Transverse colon (tissue), 4 donors: ENCODE measurements at regions of chr17 and their contacts with region 1.

Region 1: DNA sequence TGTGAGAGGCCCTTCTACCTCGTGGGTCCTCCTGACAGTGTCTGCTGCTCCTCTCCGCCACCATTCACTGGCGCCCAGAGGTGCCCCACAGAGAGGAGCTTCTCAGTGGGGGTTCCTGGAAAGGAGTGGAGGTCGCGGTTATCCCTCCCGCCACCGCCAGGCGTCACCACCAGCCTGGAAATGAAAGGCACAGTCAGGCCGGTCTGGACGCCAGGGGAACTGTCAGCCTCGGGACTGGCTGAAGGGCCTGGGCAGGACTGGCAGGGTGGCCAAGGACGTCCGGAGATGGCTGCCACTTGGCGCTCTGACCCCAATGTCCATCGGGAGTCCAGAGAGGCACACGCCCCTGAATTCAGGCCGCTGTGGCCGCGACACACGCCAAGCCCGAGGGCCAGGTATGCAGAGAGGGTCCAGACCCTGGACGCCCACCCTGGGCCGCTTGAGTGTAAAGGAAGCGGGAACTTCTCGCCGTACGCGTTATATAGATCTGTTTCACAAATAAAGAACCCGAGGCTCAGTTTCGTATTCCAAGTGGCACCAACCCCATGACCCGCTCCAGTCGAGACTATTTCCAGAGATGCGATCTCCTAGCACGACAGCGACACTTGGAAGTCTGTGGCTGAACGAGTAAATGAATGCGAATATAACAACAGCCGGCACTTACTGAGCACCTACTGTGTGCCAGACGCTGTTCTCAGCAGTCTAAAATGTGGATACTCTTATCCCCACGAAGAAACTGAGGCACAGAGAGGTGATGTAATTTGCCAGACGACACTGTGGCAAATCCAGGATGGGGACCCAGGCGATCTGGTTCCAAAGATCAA is 7.6 kb upstream of the NXPH3 start:
- DNase-seq: peak; percentile 90
- H3K4me3 ChIP-seq: peak overlapping the region in 3 of 4 donors; percentile 22 to 53 (median 36)
- H3K27ac ChIP-seq: peak overlapping the region; percentile 62 to 83 (median 72)
- H3K4me1 ChIP-seq: peaks cover 10 to 42% (median 24%) of the 10 kb centered on the region in 4 donors
- H3K27me3 ChIP-seq: peaks cover 12% of the 10 kb centered on the region
- CTCF ChIP-seq: peak; percentile 92 to 99 (median 95)
- EP300 ChIP-seq: no peak
- POLR2A ChIP-seq: no peak

Region 2: GRCh38 chr17:48483471-48484131 is 1084.5 kb before region 1 on chr17:
- in situ Hi-C with region 1: no loop called
- intact Hi-C with region 1: no loop called
- DNase-seq: peak; percentile 38
- H3K4me3 ChIP-seq: no peak overlapping the region
- H3K27ac ChIP-seq: peak overlapping the region in 3 of 4 donors; percentile 15 to 37 (median 21)
- H3K4me1 ChIP-seq: peaks cover 0 to 7% (median 5%) of the 10 kb centered on the region in 4 donors
- H3K27me3 ChIP-seq: no peaks in the 10 kb centered on the region
- CTCF ChIP-seq: no peak
- EP300 ChIP-seq: no peak
- POLR2A ChIP-seq: no peak

Region 3: DNA sequence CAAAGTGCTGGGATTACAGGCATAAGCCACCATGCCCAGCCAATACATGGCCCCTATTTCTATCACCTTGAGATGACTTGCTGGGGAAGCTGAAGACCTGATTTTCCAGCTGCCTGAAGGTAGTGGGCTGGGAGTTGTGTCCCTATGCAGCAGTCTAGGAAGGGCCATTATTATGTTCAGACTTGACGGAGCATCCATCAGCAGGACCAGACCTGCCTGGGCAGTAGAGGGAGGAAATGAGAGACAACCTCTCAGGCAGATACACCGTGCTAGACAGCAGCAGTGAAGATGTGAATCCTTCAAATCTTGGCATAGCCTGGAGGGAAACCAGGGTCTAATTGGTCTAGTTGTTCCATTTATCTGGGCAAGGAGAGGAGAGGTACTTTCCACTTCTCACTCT is 301.9 kb before region 1 on chr17:
- in situ Hi-C with region 1: no loop called
- intact Hi-C with region 1: no loop called
- DNase-seq: no peak
- H3K4me3 ChIP-seq: no peak overlapping the region
- H3K27ac ChIP-seq: no peak overlapping the region
- H3K4me1 ChIP-seq: no peaks in the 10 kb centered on the region
- H3K27me3 ChIP-seq: no peaks in the 10 kb centered on the region
- CTCF ChIP-seq: no peak
- EP300 ChIP-seq: no peak
- POLR2A ChIP-seq: no peak

Region 4: GRCh38 chr17:49315551-49316257 is 252.4 kb before region 1 on chr17:
- in situ Hi-C with region 1: loop called in 2 of 4 experiments (anchors 25 kb)
- intact Hi-C with region 1: no loop called
- DNase-seq: peak; percentile 79
- H3K4me3 ChIP-seq: peak overlapping the region in 1 of 4 donors; percentile 4
- H3K27ac ChIP-seq: peak overlapping the region in 1 of 4 donors; percentile 32
- H3K4me1 ChIP-seq: peaks cover 0 to 13% (median 0%) of the 10 kb centered on the region in 4 donors
- H3K27me3 ChIP-seq: no peaks in the 10 kb centered on the region
- CTCF ChIP-seq: peak; percentile 74 to 86 (median 84)
- EP300 ChIP-seq: no peak
- POLR2A ChIP-seq: no peak

Region 5: GRCh38 chr17:49616601-49617131 is 48.6 kb after region 1 on chr17:
- in situ Hi-C with region 1: no loop called
- intact Hi-C with region 1: no loop called
- DNase-seq: peak; percentile 38
- H3K4me3 ChIP-seq: no peak overlapping the region
- H3K27ac ChIP-seq: peak overlapping the region; percentile 57 to 80 (median 68)
- H3K4me1 ChIP-seq: peaks cover 13 to 36% (median 19%) of the 10 kb centered on the region in 4 donors
- H3K27me3 ChIP-seq: no peaks in the 10 kb centered on the region
- CTCF ChIP-seq: no peak
- EP300 ChIP-seq: no peak
- POLR2A ChIP-seq: no peak

Region 6: GRCh38 chr17:49694847-49695683 is 127.0 kb after region 1 on chr17:
- in situ Hi-C with region 1: loop called (anchors 5 to 10 kb)
- intact Hi-C with region 1: loop called (anchors 2 kb)
- DNase-seq: peak; percentile 72
- H3K4me3 ChIP-seq: no peak overlapping the region
- H3K27ac ChIP-seq: peak overlapping the region in 1 of 4 donors; percentile 6
- H3K4me1 ChIP-seq: peaks cover 0 to 24% (median 10%) of the 10 kb centered on the region in 4 donors
- H3K27me3 ChIP-seq: no peaks in the 10 kb centered on the region
- CTCF ChIP-seq: peak; percentile 91 to 96 (median 93)
- EP300 ChIP-seq: no peak
- POLR2A ChIP-seq: no peak

Region 7: DNA sequence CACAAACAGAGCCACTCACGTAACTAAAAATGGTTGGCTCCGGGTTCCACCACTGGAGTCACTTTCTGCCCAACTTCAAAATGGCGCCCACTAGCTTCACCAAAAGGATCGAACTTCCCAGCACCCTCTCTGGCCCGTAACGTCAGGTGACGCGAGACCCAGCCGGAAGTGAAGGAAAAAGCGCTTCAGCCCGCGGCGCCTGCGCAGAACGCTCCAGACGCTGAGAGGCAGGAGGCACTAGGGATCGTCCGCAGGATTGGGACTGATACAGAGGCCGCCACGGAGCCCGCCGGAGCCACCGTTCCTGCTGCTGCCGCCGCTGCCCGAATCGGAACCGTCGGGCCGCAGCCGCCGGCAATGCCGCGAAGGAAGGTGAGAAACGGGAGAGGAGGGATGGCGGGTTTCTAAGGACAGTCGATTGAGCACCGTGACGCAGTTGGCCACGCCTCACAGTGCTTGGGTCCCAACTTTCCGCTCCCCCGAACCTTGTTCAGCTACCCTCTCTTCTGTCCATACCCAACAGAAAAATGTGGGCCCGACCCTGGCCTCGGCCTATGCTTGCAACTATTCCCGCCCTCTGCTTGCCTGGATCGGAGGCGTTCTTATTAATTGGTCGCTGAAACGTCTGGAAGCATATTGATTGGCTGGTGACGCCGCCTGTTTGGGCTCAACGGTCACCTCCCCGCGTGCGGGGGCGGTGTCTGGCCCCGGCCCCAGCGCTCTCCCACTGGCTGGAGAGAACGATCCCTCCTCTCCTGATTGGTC is 220.6 kb after region 1 on chr17 and contains the start of gene KAT7:
- in situ Hi-C with region 1: loop called in 1 of 4 experiments (anchors 10 kb)
- intact Hi-C with region 1: no loop called
- DNase-seq: peak; percentile 99
- H3K4me3 ChIP-seq: peak within 1 kb of the TSS; percentile 69 to 96 (median 91)
- H3K27ac ChIP-seq: peak within 1 kb of the TSS; percentile 94 to 99 (median 99)
- H3K4me1 ChIP-seq: peaks cover 13 to 53% (median 22%) of the 10 kb centered on the region in 4 donors
- H3K27me3 ChIP-seq: no peaks in the 10 kb centered on the region
- CTCF ChIP-seq: peak in 1 of 5 experiments; percentile 19
- EP300 ChIP-seq: no peak
- POLR2A ChIP-seq: peak; percentile 93
- total RNA-seq, gene KAT7: 21.3 to 54.2 (median 32.8) TPM

Region 8: DNA sequence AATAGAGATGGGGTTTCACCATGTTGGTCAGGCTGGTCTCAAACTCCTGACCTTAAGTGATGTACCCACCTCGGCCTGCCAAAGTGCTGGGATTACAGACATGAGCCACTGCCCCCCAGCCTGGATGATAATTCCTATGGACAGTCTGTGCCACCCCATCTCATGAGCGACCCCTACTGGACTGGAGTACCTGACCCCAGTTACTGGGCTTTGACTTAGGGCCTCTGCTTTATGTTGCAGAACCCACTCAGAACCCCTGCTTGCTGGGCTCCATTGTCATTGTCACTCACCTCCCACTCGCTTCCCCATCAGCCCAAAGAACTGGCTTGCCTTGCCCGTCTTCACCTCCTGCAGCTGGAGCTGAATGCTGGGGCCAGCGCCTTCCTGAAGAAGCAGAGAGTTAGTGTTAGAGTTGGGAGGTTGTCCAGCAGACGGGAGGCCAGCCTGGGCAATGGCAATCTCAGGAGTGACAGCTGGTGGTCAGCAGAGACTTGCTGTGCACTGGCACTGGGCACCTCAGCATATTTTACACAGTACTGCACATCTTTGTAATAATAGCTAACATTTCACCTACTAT is 275.8 kb after region 1 on chr17:
- in situ Hi-C with region 1: loop called in 1 of 4 experiments (anchors 10 kb)
- intact Hi-C with region 1: no loop called
- DNase-seq: no peak
- H3K4me3 ChIP-seq: no peak overlapping the region
- H3K27ac ChIP-seq: no peak overlapping the region
- H3K4me1 ChIP-seq: peaks cover 0 to 20% (median 12%) of the 10 kb centered on the region in 4 donors
- H3K27me3 ChIP-seq: no peaks in the 10 kb centered on the region
- CTCF ChIP-seq: peak in 1 of 5 experiments; percentile 21
- EP300 ChIP-seq: no peak
- POLR2A ChIP-seq: no peak

Region 9: GRCh38 chr17:49851387-49852291 is 283.6 kb after region 1 on chr17:
- in situ Hi-C with region 1: loop called in 2 of 4 experiments (anchors 10 to 25 kb)
- intact Hi-C with region 1: no loop called
- DNase-seq: peak; percentile 59
- H3K4me3 ChIP-seq: peak overlapping the region; percentile 21 to 57 (median 52)
- H3K27ac ChIP-seq: peak overlapping the region in 2 of 4 donors; percentile 30 to 36
- H3K4me1 ChIP-seq: peaks cover 0 to 19% (median 14%) of the 10 kb centered on the region in 4 donors
- H3K27me3 ChIP-seq: peaks cover 40% of the 10 kb centered on the region
- CTCF ChIP-seq: peak; percentile 46 to 62 (median 55)
- EP300 ChIP-seq: no peak
- POLR2A ChIP-seq: no peak

Region 10: GRCh38 chr17:49997791-49998703 is 430.0 kb after region 1 on chr17:
- in situ Hi-C with region 1: loop called in 1 of 4 experiments (anchors 25 kb)
- intact Hi-C with region 1: no loop called
- DNase-seq: peak; percentile 83
- H3K4me3 ChIP-seq: no peak overlapping the region
- H3K27ac ChIP-seq: no peak overlapping the region
- H3K4me1 ChIP-seq: peaks cover 17 to 31% (median 27%) of the 10 kb centered on the region in 4 donors
- H3K27me3 ChIP-seq: peaks cover 98% of the 10 kb centered on the region
- CTCF ChIP-seq: peak; percentile 92 to 97 (median 96)
- EP300 ChIP-seq: no peak
- POLR2A ChIP-seq: no peak